GM23248 (cell line): ENCODE measurements at regions of chr2 and their contacts with region 1.

Region 1: GRCh38 chr2:231917280-231918066 is 8.7 kb downstream of the NPPC start:
- DNase-seq: peak; percentile 30
- H3K4me3 ChIP-seq: no peak overlapping the region
- H3K27ac ChIP-seq: no peak overlapping the region
- H3K4me1 ChIP-seq: no peaks in the 10 kb centered on the region
- H3K27me3 ChIP-seq: peaks cover 20% of the 10 kb centered on the region

Region 2: DNA sequence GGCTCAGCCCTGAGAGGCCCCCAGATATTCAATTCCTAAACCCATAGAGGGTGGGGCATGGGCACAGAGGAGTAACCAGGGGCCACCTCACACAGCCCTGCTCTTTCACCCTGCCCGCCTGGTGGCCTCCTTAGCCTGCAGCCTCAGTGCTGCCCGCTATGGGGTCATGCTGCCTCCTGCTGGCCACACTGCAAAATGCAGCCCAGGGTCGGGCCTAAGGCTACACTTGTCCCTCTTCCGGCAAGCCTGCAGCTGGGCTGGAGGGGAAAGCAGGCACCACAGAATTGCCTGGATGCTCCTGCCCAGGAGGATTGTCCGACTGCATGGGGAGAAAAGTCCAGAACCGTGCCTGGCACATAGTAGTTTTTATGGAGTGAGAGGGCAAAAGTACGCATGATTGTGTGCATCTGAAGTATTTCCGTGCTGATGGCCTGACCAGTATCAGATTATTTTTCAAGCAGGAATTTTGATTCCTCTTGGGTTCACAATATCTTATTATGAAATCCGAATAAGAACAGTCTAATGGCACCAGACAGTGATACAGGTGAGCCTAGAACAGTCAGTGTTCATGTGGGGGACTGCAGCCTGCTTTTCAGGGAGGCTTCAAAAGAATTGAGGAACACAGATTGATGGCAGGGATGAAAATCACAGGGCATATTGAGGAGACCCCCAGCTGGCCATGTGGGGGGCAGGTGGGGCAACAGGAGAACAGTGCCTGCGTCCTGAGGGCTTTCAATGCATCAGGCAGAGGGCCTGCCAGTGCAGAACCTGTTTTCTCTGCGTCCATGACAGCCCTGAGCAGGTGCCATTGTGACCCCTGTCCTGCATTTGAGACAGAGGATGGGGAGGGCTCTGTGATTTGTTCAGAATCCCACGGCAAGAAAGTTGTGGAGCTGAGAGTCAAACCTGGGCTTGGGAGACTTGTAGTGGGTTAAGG is 409.9 kb after region 1 on chr2:
- in situ Hi-C with region 1: loop called (anchors 5 kb)
- DNase-seq: peak; percentile 65
- H3K4me3 ChIP-seq: no peak overlapping the region
- H3K27ac ChIP-seq: no peak overlapping the region
- H3K4me1 ChIP-seq: no peaks in the 10 kb centered on the region
- H3K27me3 ChIP-seq: no peaks in the 10 kb centered on the region

Region 3: DNA sequence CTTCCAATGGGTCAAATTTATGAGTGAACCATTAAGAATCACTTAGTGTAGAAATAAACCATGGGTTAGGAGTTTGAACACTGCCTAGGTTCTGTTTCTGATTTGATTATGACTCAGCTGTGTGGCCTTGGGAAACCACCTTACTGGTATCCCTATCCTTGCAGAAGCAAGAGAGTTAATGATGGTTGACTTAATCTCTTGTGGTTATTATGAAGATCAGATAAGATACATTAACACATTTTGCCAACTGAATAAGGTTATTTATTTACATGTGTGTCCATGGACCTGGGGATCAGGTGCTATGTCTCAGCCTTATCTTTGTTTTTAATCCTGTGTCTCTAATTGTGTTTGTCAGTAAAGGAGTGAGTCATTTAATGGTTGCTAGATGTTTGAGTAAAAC is 864.3 kb after region 1 on chr2:
- in situ Hi-C with region 1: no loop called
- DNase-seq: peak; percentile 60
- H3K4me3 ChIP-seq: no peak overlapping the region
- H3K27ac ChIP-seq: no peak overlapping the region
- H3K4me1 ChIP-seq: no peaks in the 10 kb centered on the region
- H3K27me3 ChIP-seq: no peaks in the 10 kb centered on the region